Aorta (tissue), 5 donors: ENCODE measurements at regions of chr1 and their contacts with region 1.

Region 1: DNA sequence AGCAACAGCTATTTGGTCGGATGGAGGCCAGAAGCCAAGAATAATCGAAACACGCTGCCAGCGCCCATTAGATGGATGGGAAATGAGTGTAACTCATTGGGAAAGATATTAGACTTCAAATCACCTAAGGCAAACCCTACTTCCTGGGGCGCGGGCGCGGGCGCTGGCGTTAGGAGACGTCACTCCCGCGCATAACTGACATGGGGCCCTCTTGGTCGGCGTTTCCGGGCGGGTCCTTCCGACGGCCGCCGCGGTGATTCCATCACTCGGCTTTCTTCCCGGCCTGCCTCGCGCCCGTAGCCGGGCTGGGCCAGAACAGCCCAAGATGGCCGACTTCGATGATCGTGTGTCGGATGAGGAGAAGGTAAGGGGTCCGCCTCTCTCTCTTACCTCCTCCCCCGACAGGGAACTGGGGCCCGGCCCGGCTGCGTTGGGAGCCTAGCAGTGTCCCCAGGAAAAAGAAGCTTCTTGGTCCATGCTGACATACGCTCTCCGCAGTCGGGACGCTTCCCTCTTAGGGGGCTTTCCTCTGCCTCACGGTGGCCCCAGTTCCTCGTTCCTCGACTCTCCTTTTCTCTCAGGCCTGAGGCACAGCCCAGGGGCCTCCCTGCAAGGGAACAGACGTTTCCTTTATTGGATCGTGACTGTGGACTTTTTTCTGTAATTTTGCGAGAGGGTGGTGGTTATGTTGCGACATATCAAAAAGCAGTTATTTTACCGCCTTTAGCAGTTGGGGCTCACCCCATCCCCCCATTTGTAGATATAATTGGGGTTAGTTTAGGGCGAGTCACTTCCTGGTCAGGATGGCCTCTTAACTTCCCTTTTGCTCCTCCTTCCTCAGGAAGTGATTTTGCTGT is at the start of gene CAPZA1:
- DNase-seq: peak; percentile 94 to 97
- ATAC-seq: peak; percentile 99
- H3K4me3 ChIP-seq: peak within 1 kb of the TSS; percentile 63 to 92
- H3K27ac ChIP-seq: peak within 1 kb of the TSS; percentile 83 to 87
- H3K4me1 ChIP-seq: peaks cover 0 to 2% of the 10 kb centered on the region in 2 donors
- H3K27me3 ChIP-seq: no peaks in the 10 kb centered on the region
- total RNA-seq, gene CAPZA1: 105 to 109 TPM

Region 2: GRCh38 chr1:112369392-112370285 is 250.1 kb before region 1 on chr1:
- intact Hi-C with region 1: loop called in 1 of 2 experiments (anchors 10 kb)
- DNase-seq: peak; percentile 89 to 97
- ATAC-seq: peak; percentile 97
- H3K4me3 ChIP-seq: no peak overlapping the region
- H3K27ac ChIP-seq: no peak overlapping the region
- H3K4me1 ChIP-seq: no peaks in the 10 kb centered on the region
- H3K27me3 ChIP-seq: no peaks in the 10 kb centered on the region

Region 3: DNA sequence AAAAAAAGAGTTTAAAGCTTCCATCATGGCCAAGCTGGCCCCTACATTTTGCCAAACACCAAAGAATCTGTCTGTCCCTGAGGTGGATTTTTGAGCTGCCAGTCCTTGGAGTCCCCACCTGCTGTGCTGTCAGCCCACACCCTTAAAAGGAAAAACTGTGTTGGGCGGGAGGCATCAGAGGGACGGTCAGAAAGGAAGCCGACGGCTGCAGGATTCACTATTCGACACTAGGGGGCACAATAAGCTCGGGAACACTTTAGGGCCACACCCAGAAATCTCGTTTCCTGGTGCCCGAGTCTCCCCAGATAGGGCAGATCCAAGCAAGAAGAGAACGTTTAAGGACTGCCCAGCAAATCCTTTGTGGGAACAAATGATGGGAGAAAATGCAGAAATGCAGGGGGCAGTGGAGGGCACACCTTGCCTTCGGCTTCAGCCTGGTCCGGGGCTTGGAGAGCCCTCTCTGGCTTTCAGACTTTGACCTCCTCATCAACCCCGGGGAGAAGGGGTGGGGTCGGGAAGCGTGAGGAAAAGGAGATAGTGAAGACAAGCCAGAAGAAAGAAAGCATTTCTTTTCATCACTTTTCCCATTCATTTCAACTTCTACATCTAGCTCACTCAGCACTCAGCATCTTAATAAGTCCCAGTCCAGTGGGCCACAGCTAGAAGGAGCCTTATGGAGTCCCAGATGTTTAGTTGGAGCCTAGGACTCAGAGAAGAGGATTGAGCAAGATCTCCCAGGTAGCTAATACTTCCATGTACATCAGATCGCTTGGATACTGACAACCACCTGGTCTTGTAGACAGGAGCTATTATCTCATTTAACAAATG is 228.8 kb before region 1 on chr1:
- intact Hi-C with region 1: loop called in 1 of 2 experiments (anchors 5 kb)
- DNase-seq: peak; percentile 92 to 93
- ATAC-seq: peak; percentile 93
- H3K4me3 ChIP-seq: peak overlapping the region; percentile 48 to 49
- H3K27ac ChIP-seq: peak overlapping the region; percentile 48 to 73
- H3K4me1 ChIP-seq: peaks cover 0 to 4% of the 10 kb centered on the region in 2 donors
- H3K27me3 ChIP-seq: no peaks in the 10 kb centered on the region

Region 4: GRCh38 chr1:112488141-112488540 is 131.6 kb before region 1 on chr1:
- intact Hi-C with region 1: no loop called
- DNase-seq: no peak
- ATAC-seq: no peak
- H3K4me3 ChIP-seq: no peak overlapping the region
- H3K27ac ChIP-seq: no peak overlapping the region
- H3K4me1 ChIP-seq: no peaks in the 10 kb centered on the region
- H3K27me3 ChIP-seq: no peaks in the 10 kb centered on the region

Region 5: DNA sequence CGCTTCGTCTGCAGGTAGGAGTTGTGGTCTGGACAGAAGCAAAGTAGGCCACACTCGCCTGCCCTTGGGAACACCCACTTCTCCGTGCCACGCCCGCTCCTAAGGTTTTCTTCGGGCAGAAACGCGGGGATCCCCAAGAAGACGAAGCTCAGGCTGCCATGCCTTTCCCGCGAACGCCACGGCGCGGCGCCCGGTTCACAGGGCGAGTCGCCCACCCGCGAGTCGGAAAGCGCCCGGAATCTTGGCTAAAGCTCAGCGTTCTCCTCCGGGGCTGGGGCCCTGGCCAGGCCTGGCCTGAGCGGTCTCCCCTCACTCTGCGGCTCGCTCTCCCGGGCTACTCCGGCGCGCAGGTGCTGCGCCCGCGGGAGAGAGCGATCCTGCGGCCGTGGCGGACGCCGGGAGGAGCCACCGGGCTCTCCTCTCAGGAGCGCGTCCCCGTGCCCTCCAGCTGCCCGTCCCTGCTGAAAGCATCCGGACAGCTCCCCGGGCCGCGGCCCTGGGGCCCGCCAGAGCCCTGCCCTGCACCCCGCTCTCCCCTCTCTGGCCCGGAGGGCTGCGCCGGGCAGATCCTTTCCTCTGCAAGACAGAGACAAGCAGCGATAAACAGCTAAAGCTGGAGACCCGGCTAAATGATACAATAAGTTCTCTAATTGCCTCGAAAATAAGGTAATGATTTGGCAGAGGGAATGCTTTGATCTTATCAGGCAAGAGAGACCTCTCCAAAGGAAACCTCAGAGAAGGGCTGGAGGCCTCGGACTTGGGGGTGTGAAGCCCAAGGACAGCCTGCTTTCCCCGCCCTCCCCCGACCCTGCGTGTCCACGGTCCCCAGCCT is 117.7 kb before region 1 on chr1:
- intact Hi-C with region 1: loop called in 1 of 2 experiments (anchors 10 kb)
- DNase-seq: peak; percentile 81 to 91
- ATAC-seq: peak; percentile 84
- H3K4me3 ChIP-seq: peak overlapping the region; percentile 27 to 28
- H3K27ac ChIP-seq: no peak overlapping the region
- H3K4me1 ChIP-seq: no peaks in the 10 kb centered on the region
- H3K27me3 ChIP-seq: no peaks in the 10 kb centered on the region

Region 6: DNA sequence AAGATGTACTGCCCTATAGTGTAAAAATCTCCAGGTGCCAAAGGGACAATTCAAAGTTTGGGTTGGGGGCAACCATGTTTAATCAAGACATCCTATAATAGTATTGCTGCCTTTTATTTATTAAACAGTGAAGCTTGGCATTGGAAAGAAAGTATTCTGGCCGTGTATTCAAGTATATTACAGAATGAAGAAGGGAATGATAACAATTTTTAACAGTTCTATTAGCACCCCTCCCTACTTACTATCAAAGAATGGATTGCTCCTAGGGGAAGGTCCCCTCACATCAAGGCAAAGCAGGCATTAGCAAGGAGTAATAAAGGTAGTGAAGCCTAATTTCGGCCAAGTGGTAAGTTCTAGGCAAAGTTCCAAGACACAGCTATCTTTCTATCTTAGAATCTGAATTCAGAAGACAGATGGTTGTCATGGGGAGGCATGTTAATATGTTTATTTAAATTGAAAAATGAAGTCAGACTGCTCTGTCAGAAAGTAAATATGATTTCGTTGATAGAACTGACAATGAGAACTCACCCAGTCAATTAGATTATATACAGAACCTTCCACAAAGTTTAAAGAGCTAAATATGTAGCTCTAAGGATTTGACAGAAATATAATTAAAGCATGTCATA is 25.4 kb before region 1 on chr1:
- intact Hi-C with region 1: no loop called
- DNase-seq: no peak
- ATAC-seq: no peak
- H3K4me3 ChIP-seq: no peak overlapping the region
- H3K27ac ChIP-seq: no peak overlapping the region
- H3K4me1 ChIP-seq: no peaks in the 10 kb centered on the region
- H3K27me3 ChIP-seq: no peaks in the 10 kb centered on the region

Region 7: DNA sequence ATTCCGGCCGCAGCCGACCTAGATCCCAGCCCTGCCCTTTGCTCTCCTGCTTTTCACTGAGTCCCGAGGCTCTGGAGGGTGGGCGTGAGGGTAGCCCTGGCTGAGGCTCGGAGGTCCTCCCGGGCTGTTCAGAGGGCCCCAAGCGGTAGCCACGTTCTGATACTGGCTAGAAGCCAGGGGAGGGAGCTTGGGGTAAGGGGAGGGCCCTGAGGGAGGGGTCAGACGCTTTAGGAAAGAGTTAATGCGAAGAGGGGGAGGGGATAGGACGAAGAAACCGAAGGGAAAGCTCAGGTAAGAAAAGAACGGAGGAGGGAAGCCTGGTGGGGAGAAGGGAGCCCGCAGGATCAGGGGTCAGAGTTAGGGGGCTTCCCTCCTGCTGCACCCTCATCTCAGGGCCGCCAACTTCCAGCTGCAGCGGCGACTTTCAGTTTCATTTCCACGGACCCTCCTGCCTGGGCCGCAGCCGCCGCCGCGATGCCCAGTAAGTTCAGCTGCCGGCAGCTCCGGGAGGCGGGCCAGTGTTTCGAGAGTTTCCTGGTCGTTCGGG is 54.8 kb after region 1 on chr1 and contains the start of gene MOV10:
- intact Hi-C with region 1: loop called in 1 of 2 experiments (anchors 5 kb)
- DNase-seq: peak; percentile 84 to 90
- ATAC-seq: peak; percentile 79
- H3K4me3 ChIP-seq: peak within 1 kb of the TSS; percentile 60 to 83
- H3K27ac ChIP-seq: peak within 1 kb of the TSS; percentile 9 to 19
- H3K4me1 ChIP-seq: no peaks in the 10 kb centered on the region
- H3K27me3 ChIP-seq: no peaks in the 10 kb centered on the region
- total RNA-seq, gene MOV10: 29.2 to 61.0 TPM

Region 8: DNA sequence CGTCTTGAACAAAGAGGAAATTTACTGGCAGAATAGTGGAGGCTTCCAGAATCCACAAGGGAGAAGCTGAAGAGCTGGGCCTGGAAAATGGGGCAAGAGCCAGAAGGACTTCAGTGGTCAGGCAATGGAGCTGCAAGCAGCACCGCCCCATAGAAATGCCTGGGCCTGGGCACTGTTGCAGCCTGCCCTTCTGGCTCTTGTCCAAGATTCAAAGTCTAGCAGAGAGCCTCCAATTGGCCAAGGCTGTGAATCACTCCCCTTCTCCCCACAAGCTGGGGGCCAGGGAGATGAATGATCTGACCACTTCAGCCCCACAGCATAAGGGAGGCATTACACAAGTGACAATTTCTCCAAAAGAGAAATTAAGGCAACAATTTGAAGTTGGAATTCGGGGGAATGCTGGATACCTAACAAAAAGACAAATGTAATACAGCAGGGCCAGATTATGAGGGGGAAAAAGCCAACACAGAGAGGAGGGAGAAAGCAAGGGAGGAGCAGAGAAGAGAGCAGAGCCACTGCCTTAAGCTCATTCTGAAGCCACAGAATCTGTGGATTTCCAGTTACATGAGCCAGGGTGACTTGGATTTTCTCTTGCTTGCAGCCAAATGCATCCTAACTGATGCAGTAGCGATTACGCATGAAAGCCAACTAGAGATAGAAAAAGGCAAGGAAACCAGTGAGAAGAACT is 533.5 kb after region 1 on chr1:
- intact Hi-C with region 1: no loop called
- DNase-seq: peak in 1 of 2 donors; percentile 61
- ATAC-seq: peak; percentile 66
- H3K4me3 ChIP-seq: no peak overlapping the region
- H3K27ac ChIP-seq: no peak overlapping the region
- H3K4me1 ChIP-seq: no peaks in the 10 kb centered on the region
- H3K27me3 ChIP-seq: no peaks in the 10 kb centered on the region

Region 9: GRCh38 chr1:113217447-113218208 is 597.9 kb after region 1 on chr1:
- intact Hi-C with region 1: no loop called
- DNase-seq: no peak
- ATAC-seq: no peak
- H3K4me3 ChIP-seq: no peak overlapping the region
- H3K27ac ChIP-seq: no peak overlapping the region
- H3K4me1 ChIP-seq: no peaks in the 10 kb centered on the region
- H3K27me3 ChIP-seq: no peaks in the 10 kb centered on the region